ENCODE measurements at regions of chr2 and their contacts with region 1.

Region 1: DNA sequence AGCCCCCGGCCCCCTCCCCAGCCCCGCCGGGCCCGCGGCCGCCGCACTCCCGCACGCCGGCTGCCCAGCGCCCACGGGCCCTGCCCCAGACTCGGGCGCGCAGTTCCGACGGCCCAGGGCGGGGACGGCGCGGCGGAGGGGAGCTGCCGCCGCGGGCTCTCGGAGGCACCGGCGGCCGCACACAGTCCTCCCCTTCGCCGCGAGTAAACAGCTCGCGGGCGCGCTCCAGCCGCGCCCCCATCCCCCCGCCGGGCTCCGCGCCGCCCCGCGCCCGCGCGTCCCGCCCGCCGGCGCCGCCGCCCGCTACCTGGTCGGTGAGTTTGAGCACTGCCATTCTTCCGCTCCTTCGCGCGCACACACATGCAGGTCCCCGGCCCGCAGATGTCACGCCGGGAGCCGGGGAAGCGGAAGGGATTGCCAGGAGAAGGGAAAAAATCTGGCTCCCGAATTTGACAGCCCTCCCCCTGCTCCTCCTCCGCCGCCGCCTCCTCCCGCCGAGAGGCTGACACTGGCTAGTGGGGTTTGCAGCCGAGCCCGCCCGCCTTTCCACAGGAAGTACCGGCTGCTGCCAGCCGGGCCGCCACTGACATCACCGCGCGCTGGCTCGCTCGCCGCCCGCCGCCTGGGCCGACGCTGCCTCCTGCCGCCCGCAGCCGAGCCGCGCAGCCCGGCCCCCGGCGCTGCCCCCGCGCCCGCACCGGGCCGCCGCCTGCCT is at the start of gene ANKRD44:
- DNase-seq: peak; percentile 90
- H3K4me3 ChIP-seq: peak within 1 kb of the TSS; percentile 92
- H3K27ac ChIP-seq: peak within 1 kb of the TSS; percentile 83
- H3K4me1 ChIP-seq: peaks cover 57% of the 10 kb centered on the region
- CTCF ChIP-seq: 0 out of 2 replicates have a peak, but pooled peaks have one; percentile 31
- total RNA-seq, gene ANKRD44: 70.3 and 73.7 TPM in 2 replicates

Region 2: GRCh38 chr2:196618661-196619060 is 691.8 kb before region 1 on chr2:
- CTCF ChIA-PET with region 1: no interaction called
- POLR2A ChIA-PET with region 1: no interaction called
- intact Hi-C with region 1: no loop called
- DNase-seq: no peak
- H3K4me3 ChIP-seq: no peak overlapping the region
- H3K27ac ChIP-seq: no peak overlapping the region
- H3K4me1 ChIP-seq: no peaks in the 10 kb centered on the region
- CTCF ChIP-seq: no peak

Region 3: GRCh38 chr2:196783431-196784094 is 526.9 kb before region 1 on chr2:
- CTCF ChIA-PET with region 1: no interaction called
- POLR2A ChIA-PET with region 1: no interaction called
- intact Hi-C with region 1: no loop called
- DNase-seq: no peak
- H3K4me3 ChIP-seq: no peak overlapping the region
- H3K27ac ChIP-seq: no peak overlapping the region
- H3K4me1 ChIP-seq: no peaks in the 10 kb centered on the region
- CTCF ChIP-seq: no peak

Region 4: DNA sequence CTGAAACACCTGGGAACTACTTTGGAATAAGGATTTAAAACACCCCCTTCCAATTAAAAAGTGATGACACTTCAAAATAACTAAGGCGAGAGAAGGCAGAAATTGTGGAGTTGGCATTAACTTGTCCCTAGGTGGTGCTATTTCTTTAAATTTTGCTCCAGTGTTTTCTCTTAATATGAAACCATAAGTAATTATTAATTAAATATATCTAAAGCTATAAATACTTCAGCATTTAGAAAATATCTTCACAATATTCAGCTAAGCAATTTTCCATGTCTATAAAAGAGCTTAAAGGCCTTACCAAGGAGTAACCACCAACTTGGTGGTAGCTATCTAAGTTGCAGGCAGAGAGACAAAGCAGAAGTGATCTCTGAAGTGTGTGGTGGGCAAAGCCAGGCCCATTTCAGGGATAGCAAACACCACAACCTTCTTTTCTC is 197.1 kb before region 1 on chr2:
- CTCF ChIA-PET with region 1: interaction called, 6 read pairs
- POLR2A ChIA-PET with region 1: interaction called, 10 read pairs
- intact Hi-C with region 1: loop called (anchors 1 kb)
- DNase-seq: peak; percentile 58
- H3K4me3 ChIP-seq: no peak overlapping the region
- H3K27ac ChIP-seq: no peak overlapping the region
- H3K4me1 ChIP-seq: peaks cover 21% of the 10 kb centered on the region
- CTCF ChIP-seq: peak; percentile 97

Region 5: DNA sequence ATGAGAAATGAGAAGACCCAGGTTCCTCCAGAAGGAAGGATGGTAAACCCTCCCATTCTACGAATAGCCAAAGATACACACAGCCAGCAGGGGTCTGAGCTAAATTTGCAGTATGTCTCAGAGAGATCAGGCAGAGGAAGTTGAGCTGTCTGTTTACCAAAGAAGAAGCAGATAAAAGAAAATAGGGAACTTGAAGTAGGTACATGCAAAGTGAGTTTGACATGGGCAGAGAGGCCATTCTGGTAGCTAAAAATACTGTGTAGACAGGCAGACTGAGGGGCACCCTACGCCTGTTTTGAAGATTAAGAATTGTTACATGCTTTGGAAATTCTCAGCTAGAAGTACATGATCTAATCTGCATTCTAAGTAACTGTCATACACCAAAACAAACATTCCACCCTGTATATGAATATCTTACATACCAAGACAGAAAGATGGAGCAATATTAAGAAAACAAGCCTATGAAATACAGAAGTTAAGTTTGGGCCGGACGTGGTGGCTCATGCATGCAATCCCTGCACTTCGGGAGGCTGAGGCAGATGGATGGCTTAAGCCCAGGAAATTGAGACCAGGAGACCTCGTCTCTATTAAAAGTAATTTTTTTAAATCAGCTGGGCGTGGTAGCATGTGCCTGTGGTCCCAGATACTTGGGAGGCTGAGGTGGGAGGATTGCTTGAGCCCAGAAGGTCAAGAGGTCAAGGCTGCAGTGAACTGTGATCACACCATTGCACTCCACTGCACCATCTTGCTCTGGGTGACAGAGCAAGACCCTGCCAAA is 157.8 kb before region 1 on chr2:
- CTCF ChIA-PET with region 1: no interaction called
- POLR2A ChIA-PET with region 1: interaction called, 5 read pairs
- intact Hi-C with region 1: loop called (anchors 2 kb)
- DNase-seq: peak; percentile 94
- H3K4me3 ChIP-seq: peak overlapping the region; percentile 56
- H3K27ac ChIP-seq: peak overlapping the region; percentile 99
- H3K4me1 ChIP-seq: peaks cover 81% of the 10 kb centered on the region
- CTCF ChIP-seq: peak; percentile 64

Region 6: DNA sequence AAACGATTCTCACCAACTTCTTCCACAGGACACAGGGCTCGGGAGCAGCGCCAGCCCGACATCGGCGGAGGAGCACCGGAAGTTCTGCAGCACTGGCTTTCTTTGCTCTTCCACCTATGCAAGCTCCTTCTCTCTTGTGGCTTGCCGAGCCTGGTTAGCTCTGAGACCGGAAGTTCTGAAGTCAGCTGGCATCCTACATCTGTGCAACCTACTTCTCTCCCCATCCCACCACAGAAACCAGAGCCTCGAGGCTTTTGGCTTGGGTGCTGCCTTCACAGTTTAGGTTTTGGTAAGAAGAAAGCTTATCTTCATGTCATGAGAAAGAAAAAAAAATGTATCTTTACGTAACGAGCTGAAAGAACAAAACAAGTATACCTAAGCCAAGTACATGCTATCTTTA is 111.5 kb before region 1 on chr2:
- CTCF ChIA-PET with region 1: interaction called, 4 read pairs
- POLR2A ChIA-PET with region 1: interaction called, 69 read pairs
- intact Hi-C with region 1: loop called (anchors 1 kb)
- DNase-seq: peak; percentile 97
- H3K4me3 ChIP-seq: peak overlapping the region; percentile 53
- H3K27ac ChIP-seq: peak overlapping the region; percentile 81
- H3K4me1 ChIP-seq: peaks cover 63% of the 10 kb centered on the region
- CTCF ChIP-seq: no peak

Region 7: DNA sequence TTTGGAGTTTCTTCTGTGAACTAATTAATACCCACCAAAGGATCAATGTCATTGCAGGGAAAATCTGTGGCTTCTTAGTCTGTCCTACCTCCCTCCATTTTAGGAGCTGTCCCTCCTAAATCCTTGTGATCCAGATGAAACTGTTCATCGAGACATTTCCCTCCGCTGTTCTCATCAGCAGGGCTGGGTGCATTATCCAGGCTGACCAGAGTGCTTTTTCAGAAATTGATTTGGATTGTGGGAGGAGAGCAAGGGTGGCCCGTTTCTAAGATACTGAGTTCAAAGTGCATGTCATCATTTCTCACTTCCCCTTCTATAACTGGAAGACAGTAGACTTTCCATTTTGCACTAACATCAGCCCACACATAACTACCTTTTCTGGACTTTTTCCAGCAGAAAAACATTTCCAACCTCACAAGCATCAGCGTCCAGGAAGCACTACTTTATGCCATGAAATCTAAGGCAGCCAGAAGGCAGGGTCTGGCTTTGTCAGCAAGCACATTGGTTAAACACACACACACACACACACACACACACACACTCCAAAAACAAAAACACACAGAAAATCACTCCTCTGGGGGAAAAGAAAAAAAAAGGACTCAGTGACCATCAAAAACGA is 94.0 kb before region 1 on chr2:
- CTCF ChIA-PET with region 1: no interaction called
- POLR2A ChIA-PET with region 1: interaction called, 31 read pairs
- intact Hi-C with region 1: no loop called
- DNase-seq: peak; percentile 76
- H3K4me3 ChIP-seq: peak overlapping the region; percentile 45
- H3K27ac ChIP-seq: peak overlapping the region; percentile 96
- H3K4me1 ChIP-seq: peaks cover 71% of the 10 kb centered on the region
- CTCF ChIP-seq: no peak

Region 8: GRCh38 chr2:197293252-197294007 is 17.0 kb before region 1 on chr2:
- CTCF ChIA-PET with region 1: interaction called, 4 read pairs
- POLR2A ChIA-PET with region 1: interaction called, 128 read pairs
- intact Hi-C with region 1: loop called (anchors 1 kb)
- DNase-seq: peak; percentile 79
- H3K4me3 ChIP-seq: peak overlapping the region; percentile 64
- H3K27ac ChIP-seq: peak overlapping the region; percentile 91
- H3K4me1 ChIP-seq: peaks cover 69% of the 10 kb centered on the region
- CTCF ChIP-seq: no peak

Region 9: DNA sequence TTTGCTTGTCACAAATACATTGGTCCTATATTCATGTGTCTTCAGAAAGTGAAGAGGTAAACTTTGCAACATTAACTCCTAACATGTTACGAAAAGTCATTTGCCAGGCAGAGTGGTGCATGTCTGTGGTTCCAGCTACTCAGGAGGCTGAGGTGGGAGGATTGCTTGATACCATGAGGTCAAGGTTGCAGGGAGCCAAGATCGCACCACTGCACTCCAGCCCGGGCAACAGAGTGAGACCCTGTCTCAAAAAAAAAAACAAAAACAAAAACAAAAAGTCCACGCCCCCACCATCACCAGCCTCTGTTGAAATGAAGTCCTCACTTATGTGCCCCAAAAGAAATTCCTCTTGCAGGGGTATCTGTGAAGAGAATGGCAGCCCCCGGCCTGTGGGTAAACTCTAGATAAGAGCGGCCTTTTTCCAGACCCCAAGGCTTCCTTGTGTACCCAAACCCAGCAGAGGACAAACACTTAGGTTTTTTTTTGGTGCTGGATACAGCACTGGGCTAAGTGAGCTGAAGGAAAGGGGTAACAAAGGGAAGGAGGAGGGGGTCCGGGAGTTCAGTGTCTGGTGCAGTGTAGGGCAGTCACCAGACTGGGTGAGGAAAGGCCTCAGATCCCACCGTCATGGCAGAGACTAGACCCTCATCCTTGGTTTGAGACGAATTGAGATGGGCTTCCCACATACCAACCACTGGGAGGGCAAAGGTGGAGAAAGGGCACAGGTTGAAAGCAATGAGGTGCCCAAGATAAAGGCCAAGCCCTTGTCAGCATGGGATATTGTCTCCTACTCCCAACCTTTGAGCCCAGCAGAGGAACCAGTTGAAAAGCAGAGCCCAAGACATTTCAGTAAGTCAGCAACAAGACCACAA is 170.0 kb after region 1 on chr2:
- CTCF ChIA-PET with region 1: no interaction called
- POLR2A ChIA-PET with region 1: no interaction called
- intact Hi-C with region 1: no loop called
- DNase-seq: no peak
- H3K4me3 ChIP-seq: no peak overlapping the region
- H3K27ac ChIP-seq: no peak overlapping the region
- H3K4me1 ChIP-seq: no peaks in the 10 kb centered on the region
- CTCF ChIP-seq: no peak

Region 10: GRCh38 chr2:197515739-197516392 is 205.4 kb after region 1 on chr2 and contains the start of gene MOB4:
- CTCF ChIA-PET with region 1: interaction called, 3 read pairs
- POLR2A ChIA-PET with region 1: interaction called, 4 read pairs
- intact Hi-C with region 1: loop called (anchors 5 kb)
- DNase-seq: peak; percentile 96
- H3K4me3 ChIP-seq: peak within 1 kb of the TSS; percentile 89
- H3K27ac ChIP-seq: peak within 1 kb of the TSS; percentile 96
- H3K4me1 ChIP-seq: peaks cover 28% of the 10 kb centered on the region
- CTCF ChIP-seq: no peak
- total RNA-seq, gene MOB4: 23.0 and 27.6 TPM in 2 replicates

Measured in OCI-LY7 (cell line).